ENCODE measurements at regions of chr14 and their contacts with region 1.

Region 1: DNA sequence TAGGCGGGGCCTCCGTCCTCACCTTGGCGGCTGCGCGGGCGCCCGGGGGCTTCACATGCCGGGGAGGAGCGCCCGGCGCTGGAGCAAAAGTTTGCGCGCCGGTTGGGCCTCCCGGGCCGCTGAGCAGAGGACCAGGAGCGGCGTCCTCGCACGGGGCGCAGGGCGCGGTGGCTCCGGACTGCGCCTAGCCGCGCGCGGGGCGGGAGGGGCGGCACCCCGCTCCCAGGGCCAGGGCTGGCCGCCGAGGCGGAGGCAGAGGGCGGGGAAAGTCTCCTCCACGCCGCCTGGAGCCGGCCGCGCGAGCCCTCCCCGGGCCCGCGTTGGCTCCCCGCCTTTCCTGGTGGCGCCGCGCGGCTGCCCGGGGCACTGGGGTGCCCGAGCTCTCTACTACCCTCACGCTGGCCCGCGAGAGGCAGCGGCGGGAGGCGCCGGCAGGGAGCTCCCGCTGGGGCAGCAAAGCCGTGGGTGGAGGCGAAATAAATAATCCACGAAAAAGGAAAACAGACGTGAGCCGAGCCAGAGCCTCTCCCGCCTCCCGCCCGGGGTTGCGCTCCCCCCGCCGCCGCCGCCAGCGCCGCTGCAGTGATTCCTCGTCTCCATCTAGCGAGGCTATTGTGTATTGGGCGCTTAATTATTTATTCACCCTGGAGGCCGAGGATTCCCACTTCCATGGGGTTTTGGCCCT is 400 bp upstream of the PRIMA1 start:
- DNase-seq: peak; percentile 90
- H3K4me3 ChIP-seq: peak overlapping the region in 1 of 2 experiments; percentile 48; a peak in 2 of 4 replicates
- H3K27ac ChIP-seq: peak overlapping the region in 1 of 2 experiments; percentile 91; a peak in 2 of 4 replicates
- H3K4me1 ChIP-seq: peaks cover 0 to 53% of the 10 kb centered on the region in 2 experiments; a peak in 2 of 4 replicates
- H3K27me3 ChIP-seq: no peaks in the 10 kb centered on the region
- CTCF ChIP-seq: no peak
- EP300 ChIP-seq: no peak; a peak in 1 of 4 replicates
- RAD21 ChIP-seq: peak; percentile 71

Region 2: GRCh38 chr14:93745603-93746273 is 42.9 kb before region 1 on chr14:
- CTCF ChIA-PET with region 1: interaction called, 14 read pairs
- POLR2A ChIA-PET with region 1: interaction called, 16 read pairs
- DNase-seq: peak; percentile 77
- H3K4me3 ChIP-seq: no peak overlapping the region
- H3K27ac ChIP-seq: peak overlapping the region in 1 of 2 experiments; percentile 99; a peak in 2 of 4 replicates
- H3K4me1 ChIP-seq: peaks cover 0 to 75% of the 10 kb centered on the region in 2 experiments; a peak in 1 of 4 replicates
- H3K27me3 ChIP-seq: no peaks in the 10 kb centered on the region
- CTCF ChIP-seq: no peak
- EP300 ChIP-seq: no peak; a peak in 1 of 4 replicates
- RAD21 ChIP-seq: no peak

Region 3: DNA sequence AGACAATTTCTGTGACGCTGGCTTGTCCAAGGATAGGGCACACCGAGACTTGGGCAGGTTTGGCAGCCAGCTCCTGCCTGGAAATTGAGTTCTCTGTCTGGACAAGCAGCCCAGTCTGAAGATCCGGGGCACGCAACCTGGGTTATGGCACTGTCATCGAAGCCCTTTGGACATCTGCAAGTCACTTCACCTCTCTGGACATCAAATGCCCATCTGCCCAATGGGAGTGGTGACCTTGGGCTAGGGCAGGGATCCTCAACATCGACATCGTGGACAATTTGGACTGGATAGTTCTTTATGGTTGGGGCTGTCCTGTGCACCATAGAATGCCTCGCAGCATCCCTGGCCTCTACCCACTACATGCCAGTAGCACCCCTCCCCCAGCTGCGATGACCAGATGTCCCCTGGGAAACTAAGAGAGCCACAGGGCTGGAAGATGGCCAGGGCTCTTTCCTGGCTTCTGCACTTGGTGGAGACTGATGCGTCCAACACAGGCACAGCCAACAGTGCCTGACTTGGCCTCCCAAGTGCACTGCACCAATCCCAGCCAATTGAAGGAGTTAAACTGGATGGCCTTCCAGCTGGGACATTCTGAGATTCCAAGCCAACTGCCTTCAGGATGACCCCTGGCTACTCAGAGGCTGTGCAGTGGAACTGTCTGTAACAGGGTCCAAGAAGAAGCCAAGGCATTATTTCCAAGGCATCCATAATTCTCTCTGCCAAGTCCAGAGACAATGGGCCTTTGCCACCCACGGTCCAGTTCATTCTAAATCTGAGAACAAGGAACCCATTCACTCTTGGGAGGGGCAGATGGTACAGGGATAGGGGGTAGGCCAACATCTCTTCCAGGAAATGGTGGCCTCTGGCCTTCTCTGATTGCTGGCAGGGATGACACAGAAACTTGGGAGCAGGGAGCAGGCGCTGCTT is 35.8 kb before region 1 on chr14:
- CTCF ChIA-PET with region 1: interaction called, 14 read pairs
- POLR2A ChIA-PET with region 1: interaction called, 16 read pairs
- DNase-seq: peak; percentile 42
- H3K4me3 ChIP-seq: no peak overlapping the region
- H3K27ac ChIP-seq: peak overlapping the region in 1 of 2 experiments; percentile 99; a peak in 2 of 4 replicates
- H3K4me1 ChIP-seq: peaks cover 0 to 50% of the 10 kb centered on the region in 2 experiments; a peak in 1 of 4 replicates
- H3K27me3 ChIP-seq: no peaks in the 10 kb centered on the region
- CTCF ChIP-seq: no peak
- EP300 ChIP-seq: peak in 1 of 2 experiments; percentile 53; a peak in 2 of 4 replicates
- RAD21 ChIP-seq: no peak; the same call in 1 of the 2 replicates

Region 4: GRCh38 chr14:93804646-93805045 is 16.0 kb after region 1 on chr14:
- CTCF ChIA-PET with region 1: interaction called, 11 read pairs
- POLR2A ChIA-PET with region 1: no interaction called
- DNase-seq: no peak
- H3K4me3 ChIP-seq: no peak overlapping the region
- H3K27ac ChIP-seq: no peak overlapping the region
- H3K4me1 ChIP-seq: no peaks in the 10 kb centered on the region
- H3K27me3 ChIP-seq: no peaks in the 10 kb centered on the region
- CTCF ChIP-seq: no peak; the same call in 1 of the 2 replicates
- EP300 ChIP-seq: no peak
- RAD21 ChIP-seq: no peak

Region 5: GRCh38 chr14:93847473-93847872 is 58.8 kb after region 1 on chr14:
- CTCF ChIA-PET with region 1: no interaction called
- POLR2A ChIA-PET with region 1: no interaction called
- DNase-seq: no peak
- H3K4me3 ChIP-seq: no peak overlapping the region
- H3K27ac ChIP-seq: no peak overlapping the region
- H3K4me1 ChIP-seq: no peaks in the 10 kb centered on the region
- H3K27me3 ChIP-seq: no peaks in the 10 kb centered on the region
- CTCF ChIP-seq: no peak
- EP300 ChIP-seq: no peak
- RAD21 ChIP-seq: no peak

Region 6: DNA sequence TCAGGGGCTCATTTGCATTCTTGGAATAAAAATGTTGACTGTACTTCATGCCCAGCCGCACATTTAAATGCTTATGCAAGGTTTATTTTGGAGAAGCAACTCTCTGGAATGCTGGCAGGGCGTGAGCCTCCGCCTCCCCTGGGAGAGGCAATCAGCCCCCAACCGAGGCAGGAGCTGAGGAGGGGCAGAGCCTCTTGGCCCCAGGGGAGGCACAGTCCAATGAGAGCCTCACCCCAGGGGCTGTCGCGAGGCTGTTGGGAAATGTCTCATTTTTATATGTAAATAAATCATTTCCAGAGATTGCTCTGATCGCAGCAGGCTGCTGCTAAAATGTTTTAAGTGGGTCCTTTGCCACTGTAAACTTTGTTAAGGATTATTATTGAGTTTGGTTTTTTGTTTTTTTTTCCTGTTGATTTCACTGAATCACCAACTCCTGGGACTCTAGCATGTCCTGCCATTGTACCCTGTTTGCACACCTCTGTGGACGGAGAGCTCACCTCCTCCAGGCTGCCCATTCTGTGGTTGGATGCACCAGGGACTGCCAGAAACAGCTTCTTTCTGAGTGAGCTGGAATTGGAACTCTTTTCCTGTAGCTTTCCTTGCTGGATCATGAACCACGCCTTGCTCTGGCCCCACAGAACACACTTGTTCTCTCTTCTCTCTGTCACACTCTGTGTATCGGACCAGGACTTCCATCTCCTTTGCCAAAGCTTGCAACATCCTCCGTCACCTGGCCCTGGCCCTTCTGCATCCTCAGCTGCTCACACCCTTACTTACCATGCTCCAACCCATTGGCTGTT is 91.5 kb after region 1 on chr14:
- CTCF ChIA-PET with region 1: no interaction called
- POLR2A ChIA-PET with region 1: no interaction called
- DNase-seq: no peak
- H3K4me3 ChIP-seq: no peak overlapping the region
- H3K27ac ChIP-seq: no peak overlapping the region
- H3K4me1 ChIP-seq: no peaks in the 10 kb centered on the region; a peak in 1 of 4 replicates
- H3K27me3 ChIP-seq: no peaks in the 10 kb centered on the region
- CTCF ChIP-seq: no peak
- EP300 ChIP-seq: no peak
- RAD21 ChIP-seq: no peak

Region 7: DNA sequence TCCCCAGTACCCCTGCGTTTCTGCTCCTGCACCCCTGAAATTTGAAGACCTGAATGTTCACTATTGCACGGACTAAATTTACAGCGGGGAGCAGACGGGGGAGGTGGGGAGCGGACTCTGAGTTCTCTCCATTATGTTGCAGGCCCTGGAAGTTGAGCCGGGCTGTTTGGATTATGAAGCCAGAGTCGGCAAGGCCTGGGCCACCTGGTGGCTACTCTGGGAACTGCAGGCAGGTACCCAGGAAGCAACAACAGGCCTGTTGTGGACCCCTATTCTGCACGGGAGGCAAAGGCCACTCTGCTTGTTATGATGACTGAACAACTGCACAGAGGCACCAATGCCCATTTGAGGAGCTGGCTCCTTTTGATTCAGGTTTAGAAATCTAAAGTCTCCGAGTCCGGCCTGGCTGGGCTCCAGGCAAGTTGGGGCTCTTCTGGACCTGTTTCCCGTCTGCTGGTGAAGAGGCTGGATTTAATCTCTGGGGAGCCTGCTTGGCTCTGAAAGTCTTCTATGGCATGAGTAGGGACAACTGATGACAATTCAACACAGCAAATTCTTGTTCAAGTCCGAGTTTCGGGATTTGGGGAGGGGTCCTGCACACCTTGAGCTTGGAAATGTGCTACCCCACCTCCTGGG is 104.4 kb after region 1 on chr14:
- CTCF ChIA-PET with region 1: interaction called, 10 read pairs
- POLR2A ChIA-PET with region 1: interaction called, 3 read pairs
- DNase-seq: peak; percentile 78
- H3K4me3 ChIP-seq: peak overlapping the region in 1 of 2 experiments; percentile 25; a peak in 2 of 4 replicates
- H3K27ac ChIP-seq: peak overlapping the region in 1 of 2 experiments; percentile 99; a peak in 2 of 4 replicates
- H3K4me1 ChIP-seq: peaks cover 0 to 62% of the 10 kb centered on the region in 2 experiments; a peak in 2 of 4 replicates
- H3K27me3 ChIP-seq: no peaks in the 10 kb centered on the region; the same call in 1 of the 2 replicates
- CTCF ChIP-seq: peak; percentile 95
- EP300 ChIP-seq: no peak
- RAD21 ChIP-seq: peak; percentile 75

Measured in SK-N-SH (cell line).